Activated B cell treated with CpG ODN at 0.5 μM for 24 hours (primary cell): ENCODE measurements at regions of chr15 and their contacts with region 1.

Region 1: DNA sequence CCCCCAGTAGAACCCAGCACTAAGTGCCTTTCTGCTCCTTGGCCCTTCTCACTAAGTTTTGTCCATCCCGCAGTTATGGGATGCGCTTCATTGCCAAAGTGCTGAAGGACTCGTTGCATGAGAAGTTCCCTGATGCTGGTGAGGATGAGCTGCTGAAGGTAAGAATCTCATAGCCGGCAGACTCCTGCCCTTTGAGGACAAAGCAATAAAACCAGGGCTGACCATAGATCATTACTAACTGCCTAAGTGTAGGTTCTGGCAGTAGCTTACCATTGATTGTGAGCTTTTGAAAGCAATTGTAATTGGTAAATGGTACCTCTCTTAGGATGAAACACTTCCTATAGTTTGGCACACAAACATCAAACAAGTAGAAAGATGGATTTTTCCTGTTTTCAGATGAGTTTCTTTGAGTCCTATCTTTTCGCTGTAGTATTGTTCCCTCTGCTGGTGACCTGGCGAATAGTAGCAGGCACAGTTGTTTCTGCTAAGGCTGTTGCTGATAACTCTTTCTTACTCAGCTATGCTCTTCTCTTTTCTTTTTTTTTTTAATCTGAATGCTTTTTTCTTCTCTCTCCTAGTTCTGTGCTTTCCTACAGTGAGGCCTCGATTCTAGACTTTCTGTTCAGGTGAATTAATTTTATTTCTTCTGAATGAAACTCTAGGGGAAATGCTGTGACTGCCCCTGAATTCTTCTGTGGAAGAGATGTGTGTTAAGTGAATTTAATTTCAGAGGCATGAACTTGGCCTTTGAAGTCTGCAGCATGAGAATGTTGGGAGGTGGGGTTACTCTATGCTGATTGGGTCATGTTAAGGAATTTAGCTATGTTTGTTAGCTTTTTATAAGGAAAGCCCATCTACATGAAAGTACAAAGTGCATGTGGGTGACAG is 47.4 kb upstream of the CRTC3 start:
- DNase-seq: no peak
- ATAC-seq: no peak
- H3K4me3 Mint-ChIP-seq: no peak overlapping the region
- H3K27ac Mint-ChIP-seq: no peak overlapping the region
- H3K4me1 Mint-ChIP-seq: peaks cover 48% of the 10 kb centered on the region
- H3K27me3 Mint-ChIP-seq: no peaks in the 10 kb centered on the region
- CTCF ChIP-seq: no peak

Region 2: GRCh38 chr15:90291679-90292356 is 190.6 kb before region 1 on chr15:
- CTCF ChIA-PET with region 1: no interaction called
- POLR2A ChIA-PET with region 1: no interaction called
- intact Hi-C with region 1: loop called (anchors 1 kb)
- DNase-seq: no peak
- ATAC-seq: no peak
- H3K4me3 Mint-ChIP-seq: no peak overlapping the region
- H3K27ac Mint-ChIP-seq: no peak overlapping the region
- H3K4me1 Mint-ChIP-seq: peaks cover 11% of the 10 kb centered on the region
- H3K27me3 Mint-ChIP-seq: peaks cover 8% of the 10 kb centered on the region
- CTCF ChIP-seq: no peak

Region 3: GRCh38 chr15:90419738-90420406 is 62.5 kb before region 1 on chr15:
- CTCF ChIA-PET with region 1: no interaction called
- POLR2A ChIA-PET with region 1: no interaction called
- intact Hi-C with region 1: loop called (anchors 10 kb)
- DNase-seq: no peak
- ATAC-seq: no peak
- H3K4me3 Mint-ChIP-seq: no peak overlapping the region
- H3K27ac Mint-ChIP-seq: no peak overlapping the region
- H3K4me1 Mint-ChIP-seq: peaks cover 64% of the 10 kb centered on the region
- H3K27me3 Mint-ChIP-seq: no peaks in the 10 kb centered on the region
- CTCF ChIP-seq: no peak

Region 4: GRCh38 chr15:90529371-90530249 is 47.2 kb after region 1 on chr15 and contains the start of gene CRTC3:
- CTCF ChIA-PET with region 1: no interaction called
- POLR2A ChIA-PET with region 1: no interaction called
- intact Hi-C with region 1: no loop called
- DNase-seq: peak; percentile 75
- ATAC-seq: peak; percentile 85
- H3K4me3 Mint-ChIP-seq: peak within 1 kb of the TSS; percentile 95
- H3K27ac Mint-ChIP-seq: peak within 1 kb of the TSS; percentile 88
- H3K4me1 Mint-ChIP-seq: peaks cover 45% of the 10 kb centered on the region
- H3K27me3 Mint-ChIP-seq: no peaks in the 10 kb centered on the region
- CTCF ChIP-seq: no peak
- total RNA-seq, gene CRTC3: 54.7 and 65.0 TPM in 2 replicates

Region 5: GRCh38 chr15:90691982-90692773 is 209.8 kb after region 1 on chr15:
- CTCF ChIA-PET with region 1: no interaction called
- POLR2A ChIA-PET with region 1: no interaction called
- intact Hi-C with region 1: loop called (anchors 10 kb)
- DNase-seq: no peak
- ATAC-seq: no peak
- H3K4me3 Mint-ChIP-seq: no peak overlapping the region
- H3K27ac Mint-ChIP-seq: no peak overlapping the region
- H3K4me1 Mint-ChIP-seq: no peaks in the 10 kb centered on the region
- H3K27me3 Mint-ChIP-seq: no peaks in the 10 kb centered on the region
- CTCF ChIP-seq: no peak

Region 6: DNA sequence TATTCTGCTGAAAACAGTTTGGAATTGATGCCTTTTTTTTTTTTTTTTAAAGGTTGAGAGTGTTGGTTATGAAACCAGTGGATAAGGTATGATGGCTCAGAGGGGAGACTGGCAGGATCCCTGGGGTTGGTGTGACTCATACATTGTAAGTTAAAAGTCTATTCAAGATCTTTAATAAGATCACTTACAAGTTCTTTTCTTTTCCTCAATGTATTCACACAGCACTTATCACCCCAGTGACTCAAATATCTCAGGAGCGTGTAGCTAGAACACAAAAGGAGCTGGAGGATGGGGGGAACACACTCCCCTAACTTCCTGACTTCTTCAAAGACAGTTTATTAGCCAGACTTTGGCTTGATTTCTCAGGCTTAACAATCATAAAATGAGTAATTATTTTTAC is 902.9 kb after region 1 on chr15:
- CTCF ChIA-PET with region 1: no interaction called
- POLR2A ChIA-PET with region 1: no interaction called
- intact Hi-C with region 1: no loop called
- DNase-seq: no peak
- ATAC-seq: no peak
- H3K4me3 Mint-ChIP-seq: no peak overlapping the region
- H3K27ac Mint-ChIP-seq: no peak overlapping the region
- H3K4me1 Mint-ChIP-seq: no peaks in the 10 kb centered on the region
- H3K27me3 Mint-ChIP-seq: peaks cover 2% of the 10 kb centered on the region
- CTCF ChIP-seq: no peak